ENCODE measurements at regions of chr7 and their contacts with region 1.

Region 1: GRCh38 chr7:153193144-153193595 is 433.6 kb downstream of the ACTR3B start:
- DNase-seq: peak; percentile 74
- H3K4me3 ChIP-seq: no peak overlapping the region
- H3K27ac ChIP-seq: no peak overlapping the region
- H3K4me1 ChIP-seq: no peaks in the 10 kb centered on the region
- H3K27me3 ChIP-seq: no peaks in the 10 kb centered on the region
- CTCF ChIP-seq: peak; percentile 29; the same call in 1 of the 2 replicates
- EP300 ChIP-seq: no peak
- RAD21 ChIP-seq: peak; percentile 63

Region 2: DNA sequence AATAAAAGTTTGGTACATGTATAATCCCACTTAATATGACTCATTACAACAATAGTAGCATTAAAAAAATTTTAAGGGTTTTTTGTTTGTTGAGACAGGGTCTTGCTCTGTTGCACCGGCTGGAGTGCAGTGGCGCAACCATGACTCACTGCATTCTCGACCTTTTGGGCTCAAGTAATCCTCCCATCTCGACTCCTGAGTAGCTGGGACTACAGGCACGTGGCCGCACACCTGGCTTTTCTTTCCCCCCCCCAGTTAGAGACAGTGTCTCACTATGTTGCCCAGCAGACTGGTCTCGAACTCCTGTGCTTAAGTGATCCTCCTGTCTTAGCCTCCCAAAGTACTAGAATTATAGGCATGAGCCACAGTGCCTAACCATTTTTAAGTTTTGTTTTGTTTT is 798.1 kb before region 1 on chr7:
- CTCF ChIA-PET with region 1: no interaction called
- POLR2A ChIA-PET with region 1: no interaction called
- DNase-seq: no peak
- H3K4me3 ChIP-seq: no peak overlapping the region
- H3K27ac ChIP-seq: no peak overlapping the region
- H3K4me1 ChIP-seq: peaks cover 0 to 2% of the 10 kb centered on the region in 2 experiments; a peak in 1 of 4 replicates
- H3K27me3 ChIP-seq: no peaks in the 10 kb centered on the region
- CTCF ChIP-seq: no peak
- EP300 ChIP-seq: no peak
- RAD21 ChIP-seq: no peak

Region 3: GRCh38 chr7:153170287-153170686 is 22.9 kb before region 1 on chr7:
- CTCF ChIA-PET with region 1: interaction called, 10 read pairs
- POLR2A ChIA-PET with region 1: no interaction called
- DNase-seq: no peak
- H3K4me3 ChIP-seq: no peak overlapping the region
- H3K27ac ChIP-seq: no peak overlapping the region
- H3K4me1 ChIP-seq: no peaks in the 10 kb centered on the region
- H3K27me3 ChIP-seq: no peaks in the 10 kb centered on the region
- CTCF ChIP-seq: no peak
- EP300 ChIP-seq: no peak
- RAD21 ChIP-seq: no peak

Region 4: GRCh38 chr7:153217032-153217431 is 23.9 kb after region 1 on chr7:
- CTCF ChIA-PET with region 1: interaction called, 13 read pairs
- POLR2A ChIA-PET with region 1: no interaction called
- DNase-seq: no peak
- H3K4me3 ChIP-seq: no peak overlapping the region
- H3K27ac ChIP-seq: no peak overlapping the region
- H3K4me1 ChIP-seq: no peaks in the 10 kb centered on the region
- H3K27me3 ChIP-seq: no peaks in the 10 kb centered on the region
- CTCF ChIP-seq: no peak
- EP300 ChIP-seq: no peak
- RAD21 ChIP-seq: no peak